Activated naive CD4-positive, alpha-beta T cell treated with anti-CD3 and anti-CD28 coated beads for 36 hours (primary cell): ENCODE measurements at regions of chr10 and their contacts with region 1.

Region 1: GRCh38 chr10:5977471-5978229 is at the start of gene IL15RA:
- DNase-seq: peak; percentile 91
- H3K4me3 Mint-ChIP-seq: peak within 1 kb of the TSS; percentile 97
- H3K27ac Mint-ChIP-seq: peak within 1 kb of the TSS; percentile 97
- H3K4me1 Mint-ChIP-seq: peaks cover 24% of the 10 kb centered on the region
- H3K27me3 Mint-ChIP-seq: no peaks in the 10 kb centered on the region
- total RNA-seq, gene IL15RA: 14.7 to 16.3 TPM

Region 2: DNA sequence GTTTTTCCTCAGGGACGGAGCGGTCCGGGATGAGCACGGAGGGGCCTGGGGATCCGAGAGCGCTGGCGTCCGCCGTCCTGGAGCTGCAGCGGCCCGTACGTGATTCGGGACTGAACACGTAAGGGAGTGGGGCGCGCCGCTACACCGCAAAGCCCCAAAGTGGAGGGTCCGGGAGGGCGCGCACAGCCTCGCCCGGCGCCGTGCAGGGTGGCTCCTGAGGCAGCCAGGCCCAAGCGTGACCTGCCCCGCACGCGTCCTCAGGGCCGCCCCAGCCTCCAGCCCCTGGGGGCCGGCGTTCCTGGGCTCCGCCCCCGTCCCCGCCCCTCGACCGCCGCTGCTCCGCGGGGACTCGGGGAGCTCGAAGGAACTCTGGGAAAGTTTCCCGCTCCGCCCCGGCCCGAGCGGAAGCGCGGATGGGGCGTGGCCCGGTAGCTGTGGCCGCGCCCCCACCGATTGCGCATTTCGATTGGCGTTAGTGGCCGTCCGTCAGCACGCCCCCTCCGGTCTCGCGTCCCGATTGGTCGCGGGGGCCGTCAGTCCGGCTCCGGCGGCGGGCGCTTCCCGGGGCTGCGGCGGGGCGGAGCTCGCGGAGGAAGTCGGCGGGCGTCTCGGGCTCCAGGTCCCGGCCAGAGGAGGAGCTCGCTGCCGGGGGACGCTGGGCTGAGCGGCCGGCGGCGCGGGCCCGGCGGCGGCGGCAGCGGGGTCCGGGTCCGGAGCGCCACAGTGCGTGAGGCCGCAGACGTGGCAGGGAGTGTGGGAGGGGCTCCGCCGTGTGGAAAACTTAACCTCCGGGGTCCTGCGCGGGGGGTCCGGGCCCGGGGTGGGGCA is 87.8 kb before region 1 on chr10 and contains the starts of genes ANKRD16 and FBH1:
- CTCF ChIA-PET with region 1: interaction called, 6 read pairs
- intact Hi-C with region 1: loop called (anchors 1 kb)
- DNase-seq: peak; percentile 97
- H3K4me3 Mint-ChIP-seq: peak within 1 kb of the TSS; percentile 92
- H3K27ac Mint-ChIP-seq: peak within 1 kb of the TSS; percentile 74
- H3K4me1 Mint-ChIP-seq: peaks cover 55% of the 10 kb centered on the region
- H3K27me3 Mint-ChIP-seq: no peaks in the 10 kb centered on the region
- total RNA-seq, gene ANKRD16: 3.6 to 3.9 TPM
- total RNA-seq, gene FBH1: 40.4 to 42.7 TPM

Region 3: GRCh38 chr10:5917305-5917704 is 60.3 kb before region 1 on chr10:
- CTCF ChIA-PET with region 1: no interaction called
- intact Hi-C with region 1: no loop called
- DNase-seq: no peak
- H3K4me3 Mint-ChIP-seq: no peak overlapping the region
- H3K27ac Mint-ChIP-seq: no peak overlapping the region
- H3K4me1 Mint-ChIP-seq: no peaks in the 10 kb centered on the region
- H3K27me3 Mint-ChIP-seq: no peaks in the 10 kb centered on the region

Region 4: DNA sequence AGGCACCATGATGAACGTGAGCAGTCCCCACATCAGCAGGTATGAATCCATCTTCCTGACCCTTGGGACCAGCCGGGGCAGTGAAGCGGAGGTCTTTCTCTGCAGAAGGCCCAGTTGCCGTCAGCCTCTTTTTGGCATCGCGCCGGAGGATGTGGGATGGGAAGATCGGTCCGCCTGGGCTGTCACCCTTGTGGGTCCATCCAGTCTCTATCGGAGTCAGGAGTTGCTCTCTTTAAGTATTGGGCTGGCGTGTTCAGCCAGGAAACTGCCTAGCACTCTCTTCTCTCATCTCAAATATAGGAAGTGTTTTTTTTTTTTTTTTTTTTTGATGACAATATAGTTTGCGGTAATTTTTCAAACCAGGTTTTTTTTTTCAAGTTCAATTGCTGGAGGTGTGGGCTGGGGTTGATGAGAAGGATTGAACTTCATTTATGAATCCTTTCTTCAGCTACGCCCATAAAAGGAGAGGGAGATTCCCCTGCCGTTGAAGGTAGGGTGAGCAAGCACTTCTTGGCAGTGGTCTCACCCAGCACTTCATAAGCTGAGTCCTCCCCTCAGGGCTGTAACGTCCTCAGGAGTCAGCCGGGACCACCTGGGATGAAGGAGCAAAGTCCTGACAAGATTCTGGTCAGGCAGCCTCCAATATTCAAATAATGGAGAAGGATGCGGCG is 84.6 kb after region 1 on chr10 and contains the start of gene IL2RA:
- CTCF ChIA-PET with region 1: interaction called, 6 read pairs
- intact Hi-C with region 1: loop called (anchors 1 kb)
- DNase-seq: peak; percentile 83
- H3K4me3 Mint-ChIP-seq: peak within 1 kb of the TSS; percentile 86
- H3K27ac Mint-ChIP-seq: peak within 1 kb of the TSS; percentile 94
- H3K4me1 Mint-ChIP-seq: peaks cover 46% of the 10 kb centered on the region
- H3K27me3 Mint-ChIP-seq: no peaks in the 10 kb centered on the region
- total RNA-seq, gene IL2RA: 443 to 471 TPM

Region 5: DNA sequence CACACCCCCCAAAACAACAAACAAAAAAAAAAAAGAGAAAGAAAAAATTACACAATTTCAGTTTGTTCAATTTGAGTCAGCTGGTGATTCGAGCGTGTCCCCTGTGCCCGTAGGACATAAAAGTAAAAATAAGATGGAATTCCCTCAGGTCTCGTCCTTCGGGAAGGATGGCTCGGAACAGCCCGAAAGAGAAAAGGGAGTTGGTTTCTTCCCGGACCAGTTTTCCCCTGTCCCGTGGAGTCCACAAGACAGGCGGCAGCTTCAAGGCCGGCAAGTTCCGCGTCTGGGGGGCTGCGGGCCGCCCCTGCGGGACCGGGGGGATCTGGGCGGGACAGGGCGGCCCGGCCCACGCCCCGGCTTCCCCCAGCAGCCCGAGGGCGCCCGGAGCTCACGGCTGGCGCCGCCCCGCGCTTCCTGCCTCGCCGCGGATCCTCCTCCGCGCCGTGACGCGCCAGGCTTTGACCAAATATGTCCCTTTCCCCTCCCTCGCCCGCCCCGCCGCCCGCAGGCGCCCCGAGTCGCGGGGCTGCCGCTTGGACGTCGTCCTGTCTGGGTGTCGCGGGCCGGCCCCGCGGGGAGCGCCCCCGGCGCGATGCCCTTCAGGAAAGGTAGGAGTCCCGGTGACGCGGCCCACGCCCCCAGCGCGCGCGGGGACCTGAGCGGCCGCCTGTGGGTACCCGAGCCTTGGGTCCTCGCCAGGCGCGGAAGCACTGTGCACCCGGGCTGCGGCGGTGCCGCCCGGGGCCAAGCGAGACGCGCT is 166.9 kb after region 1 on chr10:
- CTCF ChIA-PET with region 1: no interaction called
- intact Hi-C with region 1: loop called (anchors 5 kb)
- DNase-seq: peak; percentile 91
- H3K4me3 Mint-ChIP-seq: peak overlapping the region; percentile 83
- H3K27ac Mint-ChIP-seq: peak overlapping the region; percentile 86
- H3K4me1 Mint-ChIP-seq: peaks cover 80% of the 10 kb centered on the region
- H3K27me3 Mint-ChIP-seq: no peaks in the 10 kb centered on the region